ENCODE measurements at regions of chr2 and their contacts with region 1.

Region 1: DNA sequence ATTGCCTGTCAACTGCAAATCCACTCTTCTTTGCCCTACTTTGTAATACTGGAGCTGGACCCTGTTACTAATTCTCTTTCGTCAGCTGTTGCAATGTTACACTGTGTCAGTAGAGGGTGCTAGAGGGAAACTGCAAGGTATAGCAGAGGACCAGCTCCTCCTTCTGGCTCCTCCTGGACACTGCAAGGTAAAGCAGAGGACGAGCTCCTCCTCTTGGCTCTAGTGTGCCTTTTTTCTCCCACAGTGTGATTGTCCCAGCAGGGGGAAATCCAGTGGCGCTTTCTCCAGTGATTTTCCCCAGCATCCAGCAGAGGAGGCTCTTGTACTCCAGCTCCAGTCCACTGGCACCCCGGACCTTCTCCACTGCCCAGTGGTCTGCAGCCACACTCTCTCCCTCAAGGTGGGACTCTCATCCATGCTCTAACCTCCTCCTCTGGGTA is 95.6 kb downstream of the CAPN13 start:
- DNase-seq: peak; percentile 96
- H3K4me3 Mint-ChIP-seq: no peak overlapping the region
- H3K27ac Mint-ChIP-seq: peak overlapping the region; percentile 67
- H3K4me1 Mint-ChIP-seq: peaks cover 15% of the 10 kb centered on the region
- H3K27me3 Mint-ChIP-seq: peaks cover 6% of the 10 kb centered on the region

Region 2: DNA sequence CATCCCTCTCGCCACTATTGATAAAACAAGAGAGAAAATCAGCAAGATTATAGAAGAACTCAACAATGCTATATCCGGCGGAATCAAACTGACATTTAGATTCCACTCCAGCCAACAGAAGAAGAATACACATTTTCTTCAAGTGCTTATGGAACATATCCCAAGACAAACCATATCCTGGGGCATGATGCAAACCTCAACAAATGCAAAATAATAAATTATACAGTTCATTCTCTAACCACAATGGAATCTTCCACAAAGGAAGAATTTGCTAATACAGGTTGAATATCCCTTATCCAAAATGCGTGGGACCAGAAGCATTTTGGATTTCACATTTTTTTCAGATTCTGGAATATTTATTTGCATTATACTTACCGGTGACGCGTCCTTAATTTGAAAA is 616.3 kb before region 1 on chr2:
- intact Hi-C with region 1: loop called (anchors 2 kb)
- DNase-seq: no peak
- H3K4me3 Mint-ChIP-seq: no peak overlapping the region
- H3K27ac Mint-ChIP-seq: no peak overlapping the region
- H3K4me1 Mint-ChIP-seq: no peaks in the 10 kb centered on the region
- H3K27me3 Mint-ChIP-seq: peaks cover 28% of the 10 kb centered on the region

Region 3: GRCh38 chr2:30208452-30208851 is 503.2 kb before region 1 on chr2:
- intact Hi-C with region 1: loop called (anchors 1 kb)
- DNase-seq: peak; percentile 75
- H3K4me3 Mint-ChIP-seq: no peak overlapping the region
- H3K27ac Mint-ChIP-seq: no peak overlapping the region
- H3K4me1 Mint-ChIP-seq: peaks cover 13% of the 10 kb centered on the region
- H3K27me3 Mint-ChIP-seq: peaks cover 9% of the 10 kb centered on the region

Region 4: DNA sequence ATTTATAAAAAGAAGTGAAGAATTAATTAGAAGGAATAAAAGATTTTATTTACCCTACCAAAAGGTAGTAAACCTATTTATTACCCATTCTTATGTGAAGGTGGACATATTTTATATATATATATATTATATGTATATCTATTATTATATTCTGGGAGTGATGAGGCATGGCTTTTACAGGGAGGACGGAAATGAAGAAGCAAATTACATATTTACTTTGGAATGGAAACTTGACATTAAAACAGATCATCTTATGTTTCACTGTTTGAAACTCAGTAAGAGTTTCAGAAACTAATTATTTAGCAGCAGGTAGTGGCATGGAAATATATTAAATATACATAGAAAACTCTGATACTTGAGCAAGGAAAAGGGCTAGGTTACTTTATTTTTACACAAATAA is 121.3 kb before region 1 on chr2:
- intact Hi-C with region 1: no loop called
- DNase-seq: no peak
- H3K4me3 Mint-ChIP-seq: no peak overlapping the region
- H3K27ac Mint-ChIP-seq: no peak overlapping the region
- H3K4me1 Mint-ChIP-seq: no peaks in the 10 kb centered on the region
- H3K27me3 Mint-ChIP-seq: no peaks in the 10 kb centered on the region

Region 5: DNA sequence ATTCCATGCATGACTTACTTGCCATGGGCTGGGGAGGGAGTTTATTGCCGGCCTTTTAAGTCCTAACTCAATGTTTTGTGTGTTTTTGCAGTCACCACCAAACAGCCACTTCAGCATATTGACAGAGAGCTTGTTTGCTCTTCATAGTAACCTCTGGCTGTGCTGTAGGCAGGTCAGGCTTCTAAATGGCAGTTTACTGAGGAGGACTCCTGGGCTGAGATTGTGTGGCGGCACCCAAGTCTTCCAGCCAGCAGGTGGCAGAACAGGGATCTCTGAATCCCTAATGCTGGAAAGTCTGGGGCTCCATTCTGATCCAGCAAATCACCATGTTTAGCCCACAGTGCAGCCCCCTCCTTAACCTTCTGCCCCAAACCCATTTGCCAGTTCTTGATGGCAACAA is 25.7 kb before region 1 on chr2:
- intact Hi-C with region 1: no loop called
- DNase-seq: peak; percentile 56
- H3K4me3 Mint-ChIP-seq: no peak overlapping the region
- H3K27ac Mint-ChIP-seq: no peak overlapping the region
- H3K4me1 Mint-ChIP-seq: no peaks in the 10 kb centered on the region
- H3K27me3 Mint-ChIP-seq: peaks cover 4% of the 10 kb centered on the region

Region 6: DNA sequence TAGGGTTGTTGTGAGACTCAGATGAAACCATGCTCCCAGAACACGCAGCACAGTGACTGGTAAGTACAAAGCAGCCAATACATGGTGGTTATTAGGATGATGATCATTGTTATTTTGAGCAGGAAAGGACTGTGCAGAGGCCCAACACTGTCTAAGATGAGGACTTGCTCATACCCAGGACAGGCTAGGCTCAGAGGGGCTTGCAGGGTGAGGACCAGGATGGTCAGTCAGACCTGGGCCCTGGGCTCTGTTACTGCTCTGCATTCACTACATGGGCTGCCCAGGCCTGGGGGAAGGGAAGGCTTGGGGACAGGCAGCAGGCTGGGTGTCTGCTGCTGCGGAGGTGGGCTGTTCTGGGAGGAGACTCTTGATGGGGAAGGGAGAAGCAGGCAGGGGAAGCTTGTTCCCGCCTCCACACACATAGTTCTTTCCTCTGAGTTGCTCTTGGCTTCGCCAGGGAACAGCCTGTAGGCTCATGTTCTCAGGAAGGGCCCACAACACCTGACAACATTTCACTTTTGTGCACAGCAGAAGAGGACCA is 78.1 kb after region 1 on chr2:
- intact Hi-C with region 1: no loop called
- DNase-seq: peak; percentile 44
- H3K4me3 Mint-ChIP-seq: no peak overlapping the region
- H3K27ac Mint-ChIP-seq: no peak overlapping the region
- H3K4me1 Mint-ChIP-seq: no peaks in the 10 kb centered on the region
- H3K27me3 Mint-ChIP-seq: peaks cover 30% of the 10 kb centered on the region

Region 7: GRCh38 chr2:31170071-31170698 is 458.5 kb after region 1 on chr2:
- intact Hi-C with region 1: loop called (anchors 1 kb)
- DNase-seq: peak; percentile 85
- H3K4me3 Mint-ChIP-seq: no peak overlapping the region
- H3K27ac Mint-ChIP-seq: no peak overlapping the region
- H3K4me1 Mint-ChIP-seq: peaks cover under 1% of the 10 kb centered on the region
- H3K27me3 Mint-ChIP-seq: peaks cover 2% of the 10 kb centered on the region

Region 8: GRCh38 chr2:31205186-31205585 is 493.5 kb after region 1 on chr2:
- intact Hi-C with region 1: no loop called
- DNase-seq: peak; percentile 23
- H3K4me3 Mint-ChIP-seq: no peak overlapping the region
- H3K27ac Mint-ChIP-seq: no peak overlapping the region
- H3K4me1 Mint-ChIP-seq: no peaks in the 10 kb centered on the region
- H3K27me3 Mint-ChIP-seq: no peaks in the 10 kb centered on the region

Region 9: GRCh38 chr2:31333527-31334183 is 622.0 kb after region 1 on chr2:
- intact Hi-C with region 1: loop called (anchors 1 kb)
- DNase-seq: peak; percentile 94
- H3K4me3 Mint-ChIP-seq: no peak overlapping the region
- H3K27ac Mint-ChIP-seq: no peak overlapping the region
- H3K4me1 Mint-ChIP-seq: no peaks in the 10 kb centered on the region
- H3K27me3 Mint-ChIP-seq: peaks cover 28% of the 10 kb centered on the region